GM10248 (cell line): ENCODE measurements at regions of chr4 and their contacts with region 1.

Region 1: GRCh38 chr4:170259631-170260153 is 169.9 kb upstream of the AADAT start:
- DNase-seq: peak; percentile 58
- CTCF ChIP-seq: peak; percentile 83

Region 2: GRCh38 chr4:170138580-170139194 is 121.0 kb before region 1 on chr4:
- CTCF ChIA-PET with region 1: interaction called, 32 read pairs
- POLR2A ChIA-PET with region 1: no interaction called
- DNase-seq: peak; percentile 66
- CTCF ChIP-seq: peak; percentile 91

Region 3: GRCh38 chr4:170157670-170158069 is 102.0 kb before region 1 on chr4:
- CTCF ChIA-PET with region 1: interaction called, 11 read pairs
- POLR2A ChIA-PET with region 1: no interaction called
- DNase-seq: no peak
- CTCF ChIP-seq: no peak

Region 4: DNA sequence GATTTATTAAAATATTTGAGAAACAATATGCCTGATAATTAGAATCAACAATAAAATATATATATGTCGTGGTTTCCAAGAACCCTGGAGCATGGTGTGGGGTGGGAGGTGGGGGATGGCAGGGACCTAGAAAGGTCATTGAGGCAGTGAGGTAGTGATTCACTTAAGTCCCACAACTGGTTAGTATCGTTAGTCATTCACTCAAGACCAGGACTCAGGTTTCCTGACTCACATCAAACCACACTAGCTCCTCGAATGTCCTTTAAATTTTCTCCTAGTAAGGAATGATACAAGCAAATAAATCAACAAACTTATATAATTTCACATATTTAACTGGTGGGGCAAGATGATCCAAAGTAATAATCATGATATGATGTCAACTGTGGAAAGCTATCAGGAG is 11.1 kb before region 1 on chr4:
- CTCF ChIA-PET with region 1: interaction called, 78 read pairs
- POLR2A ChIA-PET with region 1: no interaction called
- DNase-seq: no peak
- CTCF ChIP-seq: no peak

Region 5: DNA sequence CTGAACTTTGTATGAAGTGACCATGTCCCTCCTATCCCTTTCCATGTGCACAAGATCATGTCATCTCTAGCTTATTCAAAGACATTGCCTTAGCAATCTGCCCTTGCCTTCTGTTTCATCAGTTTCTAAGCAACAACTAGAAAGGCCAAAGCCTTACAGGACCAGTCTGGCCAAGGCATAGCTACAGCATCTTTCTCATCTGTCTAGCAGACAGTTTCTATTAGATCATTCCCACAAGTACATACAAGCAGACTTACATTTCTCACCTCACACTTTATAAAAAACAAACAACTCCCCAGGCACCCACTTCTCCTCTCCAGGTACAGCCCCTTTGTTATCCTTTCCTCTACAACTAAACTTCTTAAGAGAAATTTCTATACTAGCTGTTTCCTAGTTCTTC is 18.8 kb after region 1 on chr4:
- CTCF ChIA-PET with region 1: interaction called, 117 read pairs
- POLR2A ChIA-PET with region 1: no interaction called
- DNase-seq: no peak
- CTCF ChIP-seq: no peak

Region 6: DNA sequence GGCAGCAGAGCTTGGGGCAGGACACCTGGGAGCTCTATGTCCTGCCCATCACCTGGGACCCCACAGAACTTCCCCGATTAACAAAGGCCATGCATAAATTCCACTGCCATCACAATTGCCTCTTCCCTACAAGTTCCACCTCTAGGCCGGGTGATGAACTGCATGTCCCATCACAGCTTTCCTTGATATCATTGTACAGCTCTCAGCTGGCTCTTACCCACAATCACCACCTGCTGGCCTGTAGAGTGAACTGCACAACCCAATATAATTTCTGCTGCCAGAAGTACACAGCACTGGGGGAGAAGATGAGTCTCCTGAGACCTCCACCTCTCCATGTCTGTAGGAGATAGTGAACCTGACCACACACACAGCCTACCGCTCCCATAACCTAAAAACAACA is 115.1 kb after region 1 on chr4:
- CTCF ChIA-PET with region 1: interaction called, 174 read pairs
- POLR2A ChIA-PET with region 1: no interaction called
- DNase-seq: peak; percentile 47
- CTCF ChIP-seq: peak; percentile 65